MCF 10A (cell line): ENCODE measurements at regions of chr11 and their contacts with region 1.

Region 1: DNA sequence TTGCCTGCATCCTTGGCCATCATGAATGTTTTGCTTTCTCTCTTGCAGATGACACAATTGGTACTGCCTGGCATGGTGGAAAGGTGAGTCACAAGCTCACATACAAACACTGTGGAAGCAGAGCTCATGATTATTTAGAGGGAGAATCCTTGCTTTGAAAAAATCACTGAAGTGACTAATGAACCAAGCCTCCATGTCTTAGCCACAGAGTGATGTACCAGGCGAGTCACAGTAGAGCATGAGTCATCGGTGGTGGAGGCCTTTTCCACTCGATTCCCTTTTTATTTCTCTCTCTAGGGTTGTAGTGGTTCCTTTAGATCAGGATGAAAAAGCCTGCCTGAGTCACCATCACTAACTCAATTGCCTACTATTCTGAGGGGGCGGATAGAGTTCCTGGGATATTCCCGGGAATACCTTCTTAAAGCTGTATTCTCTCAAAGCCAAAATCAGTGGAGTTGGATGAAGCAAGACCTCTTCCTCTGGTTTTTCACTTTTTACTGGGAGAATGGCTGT is 49.6 kb upstream of the ALKBH3 start:
- DNase-seq: peak; percentile 97
- H3K4me3 Mint-ChIP-seq: peak overlapping the region; percentile 78
- H3K27ac Mint-ChIP-seq: peak overlapping the region; percentile 97
- H3K4me1 Mint-ChIP-seq: peaks cover 13% of the 10 kb centered on the region
- H3K27me3 Mint-ChIP-seq: no peaks in the 10 kb centered on the region
- CTCF ChIP-seq: no peak

Region 2: DNA sequence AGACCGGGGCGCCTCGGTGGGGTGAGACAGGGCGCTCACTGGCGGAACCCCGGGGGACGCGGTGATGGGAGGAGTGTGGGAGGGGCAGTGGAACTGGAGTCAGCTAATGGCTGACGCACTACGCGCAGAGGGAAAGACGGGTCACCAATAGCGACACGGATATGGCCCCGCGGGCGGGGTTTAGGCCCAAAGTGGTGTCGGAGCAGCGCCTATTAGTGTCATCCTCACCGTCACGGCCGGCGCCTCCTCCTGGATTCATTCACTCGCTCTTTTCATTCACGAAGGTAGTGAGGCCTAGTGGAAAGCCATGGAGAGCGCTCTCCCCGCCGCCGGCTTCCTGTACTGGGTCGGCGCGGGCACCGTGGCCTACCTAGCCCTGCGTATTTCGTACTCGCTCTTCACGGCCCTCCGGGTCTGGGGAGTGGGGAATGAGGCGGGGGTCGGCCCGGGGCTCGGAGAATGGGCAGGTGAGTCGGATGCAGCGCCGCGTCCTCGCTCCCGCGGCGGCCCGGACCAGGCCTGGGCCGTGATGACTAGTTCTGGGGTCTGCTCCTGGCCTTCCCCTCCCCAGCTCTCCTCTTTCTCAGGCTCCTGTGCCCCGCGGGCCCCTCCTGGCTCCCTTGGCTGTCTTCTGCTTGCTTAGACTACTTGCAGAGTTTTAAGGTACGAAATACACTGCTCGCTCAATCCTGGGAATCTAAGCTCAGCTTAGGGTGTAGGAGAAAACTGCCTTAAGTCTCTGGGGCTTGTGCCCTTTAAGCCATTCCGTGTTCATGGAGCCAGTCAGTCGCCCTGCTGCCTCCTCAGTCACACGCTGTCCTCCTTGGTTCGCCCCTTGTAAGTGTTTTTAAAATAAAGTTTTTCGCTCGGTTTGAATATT is 150.2 kb before region 1 on chr11 and contains the start of gene HSD17B12:
- CTCF ChIA-PET with region 1: no interaction called
- POLR2A ChIA-PET with region 1: interaction called, 4 read pairs
- intact Hi-C with region 1: loop called (anchors 5 kb)
- DNase-seq: peak; percentile 93
- H3K4me3 Mint-ChIP-seq: peak within 1 kb of the TSS; percentile 83
- H3K27ac Mint-ChIP-seq: peak within 1 kb of the TSS; percentile 98
- H3K4me1 Mint-ChIP-seq: peaks cover 8% of the 10 kb centered on the region
- H3K27me3 Mint-ChIP-seq: no peaks in the 10 kb centered on the region
- CTCF ChIP-seq: no peak
- total RNA-seq, gene HSD17B12: 110 and 117 TPM in 2 replicates

Region 3: DNA sequence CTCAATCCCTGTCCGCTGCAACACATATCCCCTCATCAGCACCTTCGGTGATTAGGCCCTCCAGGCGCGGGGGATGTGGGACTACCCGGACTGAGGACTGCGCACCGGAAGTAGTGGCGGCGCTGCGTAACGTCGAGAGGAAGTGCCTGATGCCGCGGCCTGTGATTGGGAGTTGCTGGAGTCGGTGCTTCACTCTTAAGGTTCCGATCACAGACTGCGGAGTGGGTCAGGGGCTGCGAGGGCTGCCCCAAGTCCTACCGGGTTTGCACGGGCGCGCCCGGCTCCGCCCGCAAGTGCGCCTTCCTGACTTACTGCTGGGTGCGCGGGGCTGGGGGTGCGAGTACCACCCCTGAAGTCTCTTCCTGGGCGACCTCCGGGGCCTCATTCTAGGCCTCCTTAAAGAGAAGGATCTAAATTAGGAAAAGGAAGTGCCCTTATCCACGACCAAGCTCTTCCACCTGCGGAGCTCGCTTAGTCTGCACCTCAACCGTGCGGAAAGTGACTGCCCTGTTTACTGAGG is 49.7 kb after region 1 on chr11 and contains the start of gene ALKBH3:
- CTCF ChIA-PET with region 1: no interaction called
- POLR2A ChIA-PET with region 1: interaction called, 7 read pairs
- intact Hi-C with region 1: loop called (anchors 2 kb)
- DNase-seq: peak; percentile 91
- H3K4me3 Mint-ChIP-seq: peak within 1 kb of the TSS; percentile 91
- H3K27ac Mint-ChIP-seq: peak within 1 kb of the TSS; percentile 87
- H3K4me1 Mint-ChIP-seq: peaks cover 6% of the 10 kb centered on the region
- H3K27me3 Mint-ChIP-seq: peaks cover 13% of the 10 kb centered on the region
- CTCF ChIP-seq: no peak
- total RNA-seq, gene ALKBH3: 76.2 and 88.0 TPM in 2 replicates